CD4-positive, alpha-beta T cell (primary cell): ENCODE measurements at regions of chr3 and their contacts with region 1.

Region 1: DNA sequence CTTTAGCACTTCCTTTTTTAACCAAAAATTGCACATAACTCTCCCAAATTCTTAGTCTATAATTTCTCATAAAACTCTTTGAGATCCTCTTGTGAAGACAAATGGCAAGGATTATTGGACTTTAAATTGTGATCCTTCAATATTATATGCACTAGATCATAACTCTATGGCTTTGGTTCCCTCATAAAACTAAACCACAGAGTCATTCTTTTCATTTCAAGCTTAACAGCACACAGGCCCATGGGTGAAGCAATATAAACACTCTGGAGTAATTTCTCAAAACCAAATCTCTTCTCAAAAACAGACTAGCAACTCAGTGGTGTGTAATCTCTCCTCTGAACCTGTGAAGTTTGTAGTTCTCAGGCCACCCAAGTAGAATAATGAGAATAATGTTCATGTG is 171.0 kb upstream of the NECTIN3 start:
- DNase-seq: no peak
- ATAC-seq: no peak
- H3K4me3 ChIP-seq: no peak overlapping the region
- H3K4me3 Mint-ChIP-seq: no peak overlapping the region
- H3K27ac ChIP-seq: no peak overlapping the region
- H3K27ac Mint-ChIP-seq: no peak overlapping the region
- H3K4me1 ChIP-seq: no peaks in the 10 kb centered on the region
- H3K4me1 Mint-ChIP-seq: no peaks in the 10 kb centered on the region
- H3K27me3 ChIP-seq: peaks cover 0 to 2% of the 10 kb centered on the region in 2 experiments
- H3K27me3 Mint-ChIP-seq: peaks cover 4% of the 10 kb centered on the region
- CTCF ChIP-seq: no peak

Region 2: DNA sequence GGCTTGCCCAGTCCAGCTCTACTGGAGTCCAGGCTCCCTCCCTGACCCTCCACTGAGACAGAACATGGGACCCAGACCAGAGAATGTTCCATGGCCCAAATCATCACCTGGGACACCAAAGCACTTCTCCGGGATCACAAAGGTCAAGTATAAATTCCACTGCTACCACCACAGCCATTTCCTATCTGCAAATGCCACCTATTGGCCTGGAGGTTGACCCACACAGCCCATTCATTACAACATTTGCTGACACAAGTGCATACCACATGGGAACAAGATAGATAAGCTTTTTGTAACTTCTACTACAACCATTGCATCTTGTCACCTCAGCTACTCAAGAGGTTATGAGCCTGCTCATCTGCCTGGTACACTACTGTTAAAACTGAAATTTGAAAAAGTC is 44.2 kb after region 1 on chr3:
- CTCF ChIA-PET with region 1: no interaction called
- POLR2A ChIA-PET with region 1: no interaction called
- intact Hi-C with region 1: loop called in 1 of 2 experiments (anchors 1 kb)
- DNase-seq: no peak
- ATAC-seq: no peak
- H3K4me3 ChIP-seq: no peak overlapping the region
- H3K4me3 Mint-ChIP-seq: no peak overlapping the region
- H3K27ac ChIP-seq: no peak overlapping the region
- H3K27ac Mint-ChIP-seq: no peak overlapping the region
- H3K4me1 ChIP-seq: no peaks in the 10 kb centered on the region
- H3K4me1 Mint-ChIP-seq: no peaks in the 10 kb centered on the region
- H3K27me3 ChIP-seq: no peaks in the 10 kb centered on the region
- H3K27me3 Mint-ChIP-seq: peaks cover 4% of the 10 kb centered on the region
- CTCF ChIP-seq: no peak